BJ (cell line): ENCODE measurements at regions of chr3 and their contacts with region 1.

Region 1: GRCh38 chr3:183884427-183885296 is at the start of gene PARL:
- DNase-seq: peak; percentile 47
- H3K4me3 ChIP-seq: peak within 1 kb of the TSS; percentile 98
- H3K27me3 ChIP-seq: no peaks in the 10 kb centered on the region
- CTCF ChIP-seq: peak; percentile 97
- polyA plus RNA-seq, gene PARL: 33.3 and 41.3 TPM in 2 replicates

Region 2: DNA sequence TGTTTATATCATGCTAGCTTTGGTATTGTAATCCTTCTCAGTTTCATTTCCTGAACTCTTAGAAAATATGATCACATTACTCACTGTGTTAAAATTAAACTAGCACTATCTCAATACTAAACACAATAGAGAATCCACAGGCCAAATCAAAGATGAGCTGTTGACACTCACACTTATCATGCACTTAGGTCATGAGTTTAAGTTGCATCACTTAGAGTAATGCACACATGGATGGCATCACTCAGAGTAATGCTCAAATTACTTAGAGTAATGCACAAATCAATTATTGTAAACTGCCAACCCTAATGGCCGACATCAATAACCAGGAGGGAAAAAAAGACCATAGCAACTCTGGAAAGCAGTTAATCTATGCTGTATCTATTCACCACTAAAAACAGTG is 416.2 kb before region 1 on chr3:
- CTCF ChIA-PET with region 1: interaction called, 16 read pairs
- POLR2A ChIA-PET with region 1: no interaction called
- DNase-seq: no peak
- H3K4me3 ChIP-seq: no peak overlapping the region
- H3K27me3 ChIP-seq: peaks cover 3% of the 10 kb centered on the region; the same call in 1 of the 2 replicates
- CTCF ChIP-seq: no peak

Region 3: DNA sequence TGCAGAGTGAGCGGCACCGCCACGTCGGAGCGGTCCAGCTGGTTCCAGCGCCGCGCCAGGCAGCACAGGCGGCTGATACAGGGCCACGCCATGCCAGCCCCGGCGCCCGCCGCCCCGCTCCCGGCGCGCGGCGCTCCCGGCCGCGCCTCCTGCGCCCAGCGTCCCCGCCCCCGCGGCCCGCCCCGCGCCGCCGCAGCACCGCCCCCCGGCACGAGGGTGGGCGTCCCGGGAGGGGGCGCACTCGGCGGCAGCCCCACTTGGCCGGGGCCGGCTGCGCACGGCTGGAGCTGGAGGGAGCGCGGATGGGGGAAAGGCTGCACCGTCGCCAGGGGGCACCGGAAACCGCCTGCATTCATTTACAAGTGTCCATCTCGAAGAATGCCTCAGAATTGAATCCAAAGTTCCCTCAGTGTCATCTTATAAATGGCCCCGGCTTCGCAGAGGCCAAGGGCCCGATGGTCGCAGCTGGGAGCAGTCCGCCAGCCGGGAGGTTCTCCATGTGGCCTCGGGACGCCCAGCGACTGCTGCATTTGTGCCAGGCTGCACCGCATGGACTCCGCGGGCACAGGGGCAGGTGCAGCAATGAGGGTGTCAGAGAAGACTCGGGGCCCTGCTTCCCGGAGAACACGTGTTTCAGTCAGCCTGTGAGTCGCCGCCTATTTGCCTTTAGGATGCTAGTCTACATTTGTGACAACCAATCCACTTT is 59.1 kb before region 1 on chr3 and contains the start of gene MAP6D1:
- CTCF ChIA-PET with region 1: interaction called, 24 read pairs
- POLR2A ChIA-PET with region 1: no interaction called
- DNase-seq: no peak
- H3K4me3 ChIP-seq: peak within 1 kb of the TSS; percentile 67
- H3K27me3 ChIP-seq: no peaks in the 10 kb centered on the region
- CTCF ChIP-seq: peak; percentile 40
- polyA plus RNA-seq, gene MAP6D1: 3.9 and 5.0 TPM in 2 replicates

Region 4: DNA sequence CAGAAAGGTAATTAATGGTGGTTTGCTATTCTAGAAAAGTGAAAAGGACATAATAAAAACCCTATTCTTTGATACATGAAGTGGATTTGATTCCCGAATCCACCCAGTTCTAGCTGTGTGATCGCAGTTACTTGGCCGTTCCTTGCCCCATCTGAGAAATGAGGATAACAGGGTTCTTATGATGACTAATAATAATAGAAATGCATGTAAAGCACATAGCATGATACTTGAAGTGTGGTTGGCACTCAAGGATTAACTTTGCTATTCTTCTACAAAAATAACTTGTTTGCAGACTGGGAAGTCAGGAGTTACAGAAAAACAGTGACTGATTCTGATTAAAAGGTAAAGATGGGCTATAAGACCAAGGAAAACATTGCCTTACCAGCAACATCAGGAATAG is 26.8 kb before region 1 on chr3:
- CTCF ChIA-PET with region 1: interaction called, 11 read pairs
- POLR2A ChIA-PET with region 1: no interaction called
- DNase-seq: no peak
- H3K4me3 ChIP-seq: no peak overlapping the region
- H3K27me3 ChIP-seq: no peaks in the 10 kb centered on the region
- CTCF ChIP-seq: no peak

Region 5: GRCh38 chr3:183895296-183895695 is 10.6 kb after region 1 on chr3:
- CTCF ChIA-PET with region 1: interaction called, 41 read pairs
- POLR2A ChIA-PET with region 1: no interaction called
- DNase-seq: no peak
- H3K4me3 ChIP-seq: no peak overlapping the region
- H3K27me3 ChIP-seq: peaks cover 3% of the 10 kb centered on the region; the same call in 1 of the 2 replicates
- CTCF ChIP-seq: peak; percentile 84

Region 6: DNA sequence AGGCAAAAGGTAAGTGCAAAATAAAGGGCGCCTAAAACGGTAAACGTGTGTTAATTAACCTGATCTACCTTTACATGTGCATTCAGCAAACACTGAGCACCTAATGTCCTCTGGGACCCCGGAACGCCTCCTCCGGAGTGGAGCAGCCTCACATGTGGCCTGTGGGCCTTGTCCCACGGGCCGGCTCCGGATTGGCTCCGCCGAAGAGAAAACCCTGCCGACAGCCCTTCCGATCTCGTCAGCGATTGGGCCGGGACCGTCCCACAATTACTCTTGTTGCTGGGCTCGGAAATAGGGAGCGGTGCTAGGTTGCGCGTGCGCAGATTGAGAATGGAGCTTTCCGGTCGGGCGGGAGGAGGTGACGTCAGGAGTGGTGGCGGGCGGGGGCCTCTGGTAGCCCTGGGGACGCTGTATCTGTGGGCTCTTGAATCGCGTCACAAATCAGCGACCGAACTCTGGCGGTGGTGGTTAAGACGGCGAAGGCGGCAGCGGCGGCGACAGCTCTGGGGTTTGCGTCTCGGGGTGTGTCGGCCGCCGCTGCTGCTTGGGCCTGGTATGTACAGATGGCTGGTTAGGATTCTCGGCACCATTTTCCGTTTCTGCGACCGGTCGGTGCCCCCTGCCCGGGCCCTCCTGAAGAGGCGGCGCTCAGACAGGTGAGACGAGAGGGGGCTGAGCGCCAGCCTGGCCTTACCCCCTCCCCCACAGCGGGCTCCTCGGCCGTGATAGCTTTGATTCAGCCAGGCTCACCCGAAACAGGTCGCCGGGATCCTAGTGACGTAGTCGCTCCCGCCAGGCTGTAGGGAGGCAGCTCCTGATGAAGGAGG is 1701.4 kb after region 1 on chr3 and contains the start of gene SENP2:
- CTCF ChIA-PET with region 1: no interaction called
- POLR2A ChIA-PET with region 1: interaction called, 15 read pairs
- DNase-seq: peak; percentile 95
- H3K4me3 ChIP-seq: peak within 1 kb of the TSS; percentile 88
- H3K27me3 ChIP-seq: no peaks in the 10 kb centered on the region
- CTCF ChIP-seq: no peak
- polyA plus RNA-seq, gene SENP2: 9.9 and 16.9 TPM in 2 replicates